ENCODE measurements at regions of chr12 and their contacts with region 1.

Region 1: DNA sequence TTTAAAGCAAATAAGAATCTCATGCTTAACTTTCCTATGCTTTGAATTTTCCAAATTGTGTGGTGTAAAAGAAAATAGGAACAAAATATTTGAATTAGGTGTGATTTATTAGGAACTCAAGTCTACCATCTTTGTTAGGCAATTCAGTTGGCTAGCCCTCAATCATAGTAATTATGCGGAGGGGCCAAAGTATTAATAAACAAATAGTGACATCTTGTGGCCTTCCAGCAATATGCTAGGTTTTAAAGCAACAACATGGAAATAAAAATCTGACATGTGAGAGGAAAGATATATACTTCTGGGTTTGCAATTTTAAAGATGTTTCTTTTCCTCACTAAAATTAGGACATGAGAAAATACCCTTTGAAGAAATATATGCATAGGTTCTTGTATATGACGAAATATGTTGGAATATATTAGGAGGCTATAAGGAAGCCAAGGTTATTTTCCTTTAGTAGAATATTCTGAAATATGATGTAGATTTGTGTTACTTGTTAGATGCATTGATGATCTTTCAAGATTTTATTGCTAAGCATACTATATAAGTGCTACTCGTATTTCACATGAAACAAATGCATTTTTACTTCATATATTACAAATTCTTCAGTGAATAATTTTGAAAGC is 200.4 kb downstream of the PTPRO start:
- H3K4me3 Mint-ChIP-seq: no peak overlapping the region
- H3K27ac Mint-ChIP-seq: no peak overlapping the region
- H3K4me1 Mint-ChIP-seq: peaks cover 13% of the 10 kb centered on the region
- H3K27me3 Mint-ChIP-seq: peaks cover 17% of the 10 kb centered on the region

Region 2: DNA sequence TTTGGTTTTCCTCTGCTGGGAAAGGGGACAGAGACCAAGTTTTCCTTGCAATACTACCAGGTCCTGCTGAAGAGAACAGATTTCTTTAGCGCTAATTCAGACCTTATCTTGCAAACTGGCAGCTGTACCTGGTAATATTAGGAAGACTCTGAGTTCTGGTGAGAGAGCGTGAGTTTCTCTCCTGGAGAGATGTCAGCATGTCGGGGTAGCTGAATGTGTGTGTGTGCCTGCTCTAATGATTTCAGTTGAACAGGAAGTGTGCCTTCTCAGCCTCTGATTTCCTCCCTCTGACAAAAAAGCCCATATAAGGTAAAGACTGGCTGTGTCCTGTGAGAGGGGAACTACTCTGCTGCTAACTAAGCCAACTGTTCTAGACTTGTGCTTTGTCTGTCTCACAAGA is 574.0 kb before region 1 on chr12:
- intact Hi-C with region 1: loop called (anchors 10 kb)
- H3K4me3 Mint-ChIP-seq: peak overlapping the region; percentile 59
- H3K27ac Mint-ChIP-seq: peak overlapping the region; percentile 94
- H3K4me1 Mint-ChIP-seq: peaks cover 70% of the 10 kb centered on the region
- H3K27me3 Mint-ChIP-seq: no peaks in the 10 kb centered on the region

Region 3: DNA sequence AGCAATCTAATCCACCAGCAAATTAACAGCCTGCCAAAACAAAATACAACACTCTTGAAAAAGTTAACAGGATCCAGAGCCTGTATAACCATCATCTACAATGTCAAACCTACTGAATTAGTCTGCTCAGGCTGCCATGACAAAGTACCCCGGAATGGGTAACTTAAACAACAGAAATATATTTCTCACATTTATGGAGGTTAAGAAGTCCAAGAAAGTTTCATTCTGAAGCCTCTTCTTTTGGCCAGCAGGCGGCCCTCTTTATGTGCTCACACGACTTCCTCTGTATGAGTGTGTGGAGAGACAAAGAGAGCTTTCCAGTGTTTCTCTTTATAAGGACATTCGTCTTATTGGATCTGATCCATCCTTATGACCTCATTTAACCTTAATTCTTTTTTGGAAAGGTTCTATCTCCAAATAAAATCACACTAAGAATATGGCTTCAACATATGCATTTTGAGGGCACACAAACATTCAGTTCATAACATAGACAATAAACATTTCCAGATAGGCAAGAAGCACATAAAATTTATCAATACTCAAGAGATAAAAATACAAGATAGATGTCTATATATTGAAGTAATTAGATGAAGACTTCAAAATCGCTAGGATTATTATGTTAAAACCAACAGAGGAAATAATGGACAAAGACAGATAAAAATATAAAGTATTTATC is 295.5 kb before region 1 on chr12:
- intact Hi-C with region 1: loop called (anchors 2 kb)
- H3K4me3 Mint-ChIP-seq: no peak overlapping the region
- H3K27ac Mint-ChIP-seq: no peak overlapping the region
- H3K4me1 Mint-ChIP-seq: no peaks in the 10 kb centered on the region
- H3K27me3 Mint-ChIP-seq: peaks cover 15% of the 10 kb centered on the region

Region 4: GRCh38 chr12:15276088-15276698 is 246.5 kb before region 1 on chr12:
- intact Hi-C with region 1: loop called (anchors 1 kb)
- H3K4me3 Mint-ChIP-seq: no peak overlapping the region
- H3K27ac Mint-ChIP-seq: no peak overlapping the region
- H3K4me1 Mint-ChIP-seq: peaks cover 7% of the 10 kb centered on the region
- H3K27me3 Mint-ChIP-seq: peaks cover 29% of the 10 kb centered on the region

Measured in dendritic cell treated with granulocyte-macrophage colony-stimulating factor and Interleukin-4, amounts not matched to agents 40 ng/mL and 50 ng/mL, for 4 days (primary cell).